RWPE1 (cell line): ENCODE measurements at regions of chr10 and their contacts with region 1.

Region 1: GRCh38 chr10:32023264-32023663 is 33.0 kb downstream of the KIF5B start:
- DNase-seq: no peak
- H3K27ac ChIP-seq: no peak overlapping the region
- CTCF ChIP-seq: no peak

Region 2: GRCh38 chr10:30736685-30737232 is 1286.5 kb before region 1 on chr10:
- CTCF ChIA-PET with region 1: interaction called, 11 read pairs
- POLR2A ChIA-PET with region 1: no interaction called
- DNase-seq: peak; percentile 36
- H3K27ac ChIP-seq: no peak overlapping the region
- CTCF ChIP-seq: no peak

Region 3: GRCh38 chr10:31886885-31887284 is 136.4 kb before region 1 on chr10:
- CTCF ChIA-PET with region 1: no interaction called
- POLR2A ChIA-PET with region 1: no interaction called
- DNase-seq: no peak
- H3K27ac ChIP-seq: no peak overlapping the region
- CTCF ChIP-seq: no peak

Region 4: DNA sequence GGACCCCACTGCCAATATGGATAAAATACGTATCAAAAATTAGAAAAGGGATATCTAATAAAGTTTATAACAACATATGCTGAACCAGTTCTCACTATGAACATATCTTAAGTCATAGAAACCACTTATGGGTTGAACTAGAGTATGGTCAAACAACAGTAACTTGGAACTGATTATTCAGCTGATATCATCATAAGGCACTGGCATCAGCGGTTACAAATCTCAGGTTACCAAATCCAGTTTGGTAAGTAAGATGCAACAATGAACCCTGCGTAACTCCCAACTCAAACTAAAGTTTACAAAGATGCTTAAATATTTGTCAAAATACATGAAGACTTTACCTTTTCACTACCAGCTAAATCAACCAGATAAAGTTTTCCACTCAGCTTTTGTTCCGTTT is 13.6 kb after region 1 on chr10:
- CTCF ChIA-PET with region 1: no interaction called
- POLR2A ChIA-PET with region 1: no interaction called
- DNase-seq: no peak
- H3K27ac ChIP-seq: no peak overlapping the region
- CTCF ChIP-seq: no peak